ENCODE measurements at regions of chr4 and their contacts with region 1.

Region 1: DNA sequence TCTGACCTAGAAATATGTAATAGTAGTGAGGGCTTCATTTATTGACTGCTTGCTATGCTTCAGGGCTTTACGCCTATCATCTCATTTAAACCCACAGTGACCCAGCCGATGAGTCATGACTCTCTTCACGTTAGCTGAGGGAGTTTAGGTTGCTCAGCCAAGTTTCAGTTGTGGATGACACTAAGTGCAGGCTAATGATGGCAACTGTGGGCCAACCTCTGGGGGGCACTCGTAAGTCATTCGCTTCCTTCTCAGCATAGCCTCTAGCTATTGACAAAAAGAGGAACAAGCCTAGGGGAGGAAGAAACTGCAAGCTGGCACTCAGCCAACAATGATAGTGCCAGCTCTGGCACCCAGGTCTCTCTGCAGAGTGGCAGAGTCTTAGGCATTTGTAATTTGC is 325.0 kb downstream of the ARHGAP10 start:
- DNase-seq: peak; percentile 92
- ATAC-seq: peak; percentile 89
- H3K4me3 Mint-ChIP-seq: no peak overlapping the region
- H3K27ac Mint-ChIP-seq: peak overlapping the region; percentile 74
- H3K4me1 Mint-ChIP-seq: peaks cover 92% of the 10 kb centered on the region
- H3K27me3 Mint-ChIP-seq: no peaks in the 10 kb centered on the region

Region 2: DNA sequence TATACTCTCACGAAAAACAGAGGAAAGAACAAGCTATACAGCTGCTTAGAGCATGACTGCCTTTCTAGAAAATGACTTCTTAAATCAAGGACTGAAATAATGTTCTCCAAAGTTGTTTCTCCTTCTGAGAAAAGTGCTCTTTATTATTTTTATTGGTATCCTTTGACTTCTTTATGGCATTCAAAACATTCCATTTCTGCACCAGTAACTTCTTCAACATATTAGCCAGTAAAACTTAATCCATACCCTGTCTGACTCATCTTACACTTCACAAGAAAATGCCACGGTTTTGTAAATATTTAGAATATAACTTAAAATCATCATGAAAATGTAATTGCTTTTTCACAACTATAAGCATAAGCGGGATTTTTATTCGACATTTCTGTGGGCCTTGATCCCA is 205.0 kb after region 1 on chr4:
- CTCF ChIA-PET with region 1: no interaction called
- DNase-seq: no peak
- ATAC-seq: no peak
- H3K4me3 Mint-ChIP-seq: no peak overlapping the region
- H3K27ac Mint-ChIP-seq: no peak overlapping the region
- H3K4me1 Mint-ChIP-seq: no peaks in the 10 kb centered on the region
- H3K27me3 Mint-ChIP-seq: no peaks in the 10 kb centered on the region

Region 3: DNA sequence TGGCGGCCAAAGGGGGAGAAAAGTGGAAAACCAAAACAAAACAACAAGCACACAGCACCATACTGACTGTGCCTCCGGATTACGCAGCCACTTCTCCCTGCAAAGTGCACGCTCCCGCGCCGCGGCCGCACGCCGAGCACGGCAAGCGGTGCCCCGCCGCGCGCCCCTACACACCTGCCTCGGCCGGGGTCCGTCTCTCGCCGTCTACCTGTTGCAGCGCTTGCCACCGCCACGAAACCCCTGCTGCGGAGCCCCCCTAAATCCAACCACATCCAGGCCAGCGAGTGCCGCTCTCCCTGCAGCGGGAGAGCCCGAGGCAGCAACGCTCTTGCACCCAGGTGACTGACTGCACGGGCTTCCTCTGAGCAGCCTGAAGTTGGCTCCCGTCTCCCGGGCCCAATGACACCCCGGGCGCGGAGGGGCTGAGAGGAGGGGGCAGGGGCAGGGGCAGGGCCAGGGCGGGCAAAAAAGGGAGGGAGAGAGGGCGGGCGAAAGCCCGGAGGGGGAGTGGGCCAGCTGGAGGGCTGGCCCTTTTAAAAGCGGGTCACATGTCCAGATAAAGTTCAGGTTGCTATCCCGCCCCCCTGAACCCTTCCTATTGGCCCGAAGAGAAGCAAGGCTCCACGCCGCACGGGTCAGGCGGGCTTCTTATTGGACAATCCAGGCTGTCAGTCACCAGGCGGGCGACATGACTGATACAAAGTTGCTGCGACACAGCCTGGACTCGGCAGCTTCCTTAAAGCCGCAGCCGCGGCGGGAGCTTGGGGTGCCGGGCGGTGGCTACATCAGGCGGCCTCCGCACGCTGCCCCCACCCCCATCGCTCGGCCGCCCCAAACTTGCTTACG is 385.3 kb after region 1 on chr4 and contains the start of gene NR3C2:
- CTCF ChIA-PET with region 1: interaction called, 13 read pairs
- DNase-seq: peak; percentile 99
- ATAC-seq: peak; percentile 90
- H3K4me3 Mint-ChIP-seq: peak within 1 kb of the TSS; percentile 93
- H3K27ac Mint-ChIP-seq: peak within 1 kb of the TSS; percentile 89
- H3K4me1 Mint-ChIP-seq: peaks cover 27% of the 10 kb centered on the region
- H3K27me3 Mint-ChIP-seq: peaks cover 21% of the 10 kb centered on the region
- total RNA-seq, gene NR3C2: 2.2 to 9.0 TPM